Thyroid gland (tissue), 4 donors: ENCODE measurements at regions of chr15 and their contacts with region 1.

Region 1: DNA sequence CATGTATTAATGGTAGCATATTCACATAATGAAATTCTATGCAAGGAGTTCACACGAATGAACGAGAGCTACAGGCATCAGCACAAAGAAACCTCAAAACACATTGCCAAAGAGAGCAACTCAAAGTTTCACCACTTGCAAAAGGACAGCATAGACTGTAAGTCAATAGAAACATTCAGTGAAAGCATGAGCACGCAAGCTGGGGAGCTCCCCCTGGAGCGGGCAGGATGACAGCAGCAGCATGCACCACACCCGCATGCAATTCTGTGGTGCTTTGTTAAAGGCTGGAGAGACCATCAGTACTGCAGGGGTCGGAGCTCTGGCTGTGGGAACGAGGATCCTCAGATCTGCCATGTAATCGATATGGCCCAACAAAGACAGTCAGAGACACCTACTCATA is 18.7 kb downstream of the OCA2 start:
- DNase-seq: no peak
- H3K4me3 ChIP-seq: no peak overlapping the region
- H3K27ac ChIP-seq: no peak overlapping the region
- H3K4me1 ChIP-seq: no peaks in the 10 kb centered on the region
- H3K27me3 ChIP-seq: no peaks in the 10 kb centered on the region
- CTCF ChIP-seq: no peak
- POLR2A ChIP-seq: no peak

Region 2: DNA sequence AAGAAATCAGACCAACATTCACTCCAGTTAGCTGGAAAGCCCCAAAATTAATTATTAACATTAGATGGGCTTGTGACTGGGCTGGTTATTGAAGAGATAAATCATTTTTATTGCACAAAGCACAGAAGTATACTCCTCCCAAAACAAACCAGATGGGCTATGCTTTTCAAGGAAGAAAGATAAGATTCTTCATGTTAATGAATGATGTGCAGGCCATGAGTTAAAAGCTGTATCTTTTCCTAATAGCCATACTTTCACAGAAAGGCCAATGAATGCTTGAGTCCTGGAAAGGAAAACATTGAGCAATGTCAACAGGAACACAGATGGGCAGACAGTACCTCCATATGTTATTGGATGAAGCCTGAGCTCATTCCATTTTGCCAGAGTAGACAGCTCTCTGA is 36.7 kb before region 1 on chr15:
- intact Hi-C with region 1: no loop called
- DNase-seq: no peak
- H3K4me3 ChIP-seq: no peak overlapping the region
- H3K27ac ChIP-seq: no peak overlapping the region
- H3K4me1 ChIP-seq: no peaks in the 10 kb centered on the region
- H3K27me3 ChIP-seq: no peaks in the 10 kb centered on the region
- CTCF ChIP-seq: no peak
- POLR2A ChIP-seq: no peak

Region 3: GRCh38 chr15:28120359-28120640 is 39.9 kb after region 1 on chr15:
- intact Hi-C with region 1: loop called (anchors 2 kb)
- DNase-seq: no peak
- H3K4me3 ChIP-seq: no peak overlapping the region
- H3K27ac ChIP-seq: no peak overlapping the region
- H3K4me1 ChIP-seq: peaks cover 5 to 7% of the 10 kb centered on the region in 2 donors
- H3K27me3 ChIP-seq: no peaks in the 10 kb centered on the region
- CTCF ChIP-seq: no peak
- POLR2A ChIP-seq: no peak

Region 4: GRCh38 chr15:28167042-28167441 is 86.7 kb after region 1 on chr15:
- intact Hi-C with region 1: no loop called
- DNase-seq: no peak
- H3K4me3 ChIP-seq: no peak overlapping the region
- H3K27ac ChIP-seq: no peak overlapping the region
- H3K4me1 ChIP-seq: no peaks in the 10 kb centered on the region
- H3K27me3 ChIP-seq: no peaks in the 10 kb centered on the region
- CTCF ChIP-seq: no peak
- POLR2A ChIP-seq: no peak